CD8-positive, alpha-beta T cell (primary cell): ENCODE measurements at regions of chr12 and their contacts with region 1.

Region 1: DNA sequence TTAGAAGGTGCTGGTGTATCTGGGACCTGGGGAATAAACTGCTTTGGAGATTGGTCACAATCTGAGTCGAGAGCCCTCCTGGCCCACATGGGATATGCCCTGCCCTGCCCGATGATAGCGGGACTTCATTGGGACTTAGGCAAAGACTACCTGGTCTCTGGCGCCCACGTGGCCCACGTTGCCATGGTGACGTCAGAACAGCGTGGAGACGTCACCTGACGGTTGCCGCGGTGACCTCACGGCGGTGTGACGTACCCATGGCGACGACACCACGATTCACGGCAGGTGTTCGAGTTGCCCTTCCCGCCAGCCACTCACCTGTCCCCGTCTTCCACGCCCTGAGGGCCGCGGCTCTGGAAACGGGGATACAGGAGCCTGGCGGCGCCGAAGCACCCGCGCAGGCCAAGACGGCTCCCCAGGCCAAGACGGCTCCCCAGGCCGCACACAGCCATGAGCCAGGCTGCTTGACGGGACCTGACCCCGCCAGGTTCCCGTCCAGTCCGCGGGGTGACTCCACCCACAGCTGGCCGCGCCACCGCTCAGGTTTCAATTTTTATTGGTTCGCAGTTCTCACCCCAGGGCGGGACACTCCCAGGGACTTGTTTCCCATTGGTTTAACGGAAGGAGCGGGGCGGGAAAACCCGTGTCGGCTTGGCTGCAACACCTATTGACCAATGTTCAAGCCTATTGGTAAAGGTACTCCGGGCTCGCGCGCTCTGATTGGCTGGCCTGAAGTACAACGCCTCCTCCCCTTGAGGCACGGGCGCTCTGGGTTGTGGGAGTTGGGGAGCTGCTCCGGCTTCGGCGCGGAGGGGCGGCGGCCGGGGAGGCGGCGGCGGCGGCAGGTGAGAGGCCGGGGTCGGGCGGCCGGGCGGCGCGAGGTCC is at the starts of genes MMAB and MVK:
- DNase-seq: peak; percentile 96 to 99 (median 98)
- ATAC-seq: peak; percentile 92
- H3K4me3 ChIP-seq: peak within 1 kb of the TSS; percentile 73 to 82
- H3K4me3 Mint-ChIP-seq: peak within 1 kb of the TSS; percentile 95
- H3K27ac ChIP-seq: peak within 1 kb of the TSS; percentile 95
- H3K27ac Mint-ChIP-seq: peak within 1 kb of the TSS; percentile 96
- H3K4me1 ChIP-seq: peaks cover 16% of the 10 kb centered on the region
- H3K4me1 Mint-ChIP-seq: peaks cover 35% of the 10 kb centered on the region
- H3K27me3 ChIP-seq: no peaks in the 10 kb centered on the region
- H3K27me3 Mint-ChIP-seq: no peaks in the 10 kb centered on the region
- CTCF ChIP-seq: no peak
- total RNA-seq, gene MMAB: 10.2 to 11.7 TPM
- total RNA-seq, gene MVK: 11.5 to 13.9 TPM

Region 2: GRCh38 chr12:109154451-109155438 is 418.5 kb before region 1 on chr12:
- CTCF ChIA-PET with region 1: no interaction called
- POLR2A ChIA-PET with region 1: no interaction called
- intact Hi-C with region 1: loop called in 1 of 2 experiments (anchors 5 kb)
- DNase-seq: peak; percentile 60 to 89 (median 78)
- ATAC-seq: peak; percentile 98
- H3K4me3 ChIP-seq: peak overlapping the region; percentile 60 to 80
- H3K4me3 Mint-ChIP-seq: peak overlapping the region; percentile 95
- H3K27ac ChIP-seq: peak overlapping the region; percentile 22 to 46
- H3K27ac Mint-ChIP-seq: peak overlapping the region; percentile 89
- H3K4me1 ChIP-seq: peaks cover 20% of the 10 kb centered on the region
- H3K4me1 Mint-ChIP-seq: peaks cover 17% of the 10 kb centered on the region
- H3K27me3 ChIP-seq: no peaks in the 10 kb centered on the region
- H3K27me3 Mint-ChIP-seq: peaks cover 3% of the 10 kb centered on the region
- CTCF ChIP-seq: no peak

Region 3: GRCh38 chr12:109597795-109598427 is 24.6 kb after region 1 on chr12:
- CTCF ChIA-PET with region 1: interaction called, 15 read pairs
- POLR2A ChIA-PET with region 1: interaction called, 4 read pairs
- intact Hi-C with region 1: no loop called
- DNase-seq: peak; percentile 31 to 76 (median 64)
- ATAC-seq: peak; percentile 70
- H3K4me3 ChIP-seq: no peak overlapping the region
- H3K4me3 Mint-ChIP-seq: no peak overlapping the region
- H3K27ac ChIP-seq: no peak overlapping the region
- H3K27ac Mint-ChIP-seq: no peak overlapping the region
- H3K4me1 ChIP-seq: peaks cover 11% of the 10 kb centered on the region
- H3K4me1 Mint-ChIP-seq: peaks cover 23% of the 10 kb centered on the region
- H3K27me3 ChIP-seq: no peaks in the 10 kb centered on the region
- H3K27me3 Mint-ChIP-seq: no peaks in the 10 kb centered on the region
- CTCF ChIP-seq: peak; percentile 85

Region 4: GRCh38 chr12:110124184-110124995 is 551.1 kb after region 1 on chr12 and contains the start of gene IFT81:
- CTCF ChIA-PET with region 1: no interaction called
- POLR2A ChIA-PET with region 1: no interaction called
- intact Hi-C with region 1: loop called (anchors 1 to 10 kb)
- DNase-seq: peak; percentile 94 to 99 (median 96)
- ATAC-seq: peak; percentile 95
- H3K4me3 ChIP-seq: peak within 1 kb of the TSS; percentile 69 to 96
- H3K4me3 Mint-ChIP-seq: peak within 1 kb of the TSS; percentile 91
- H3K27ac ChIP-seq: peak within 1 kb of the TSS; percentile 60 to 73
- H3K27ac Mint-ChIP-seq: peak within 1 kb of the TSS; percentile 83
- H3K4me1 ChIP-seq: peaks cover 10% of the 10 kb centered on the region
- H3K4me1 Mint-ChIP-seq: peaks cover 8% of the 10 kb centered on the region
- H3K27me3 ChIP-seq: no peaks in the 10 kb centered on the region
- H3K27me3 Mint-ChIP-seq: peaks cover 3% of the 10 kb centered on the region
- CTCF ChIP-seq: no peak
- total RNA-seq, gene IFT81: 0.25 to 0.43 TPM

Region 5: GRCh38 chr12:110403146-110403975 is 830.1 kb after region 1 on chr12 and contains the start of gene ANAPC7:
- CTCF ChIA-PET with region 1: no interaction called
- POLR2A ChIA-PET with region 1: no interaction called
- intact Hi-C with region 1: loop called in 1 of 2 experiments (anchors 5 kb)
- DNase-seq: peak; percentile 69 to 93 (median 87)
- ATAC-seq: peak; percentile 96
- H3K4me3 ChIP-seq: peak within 1 kb of the TSS; percentile 87 to 89
- H3K4me3 Mint-ChIP-seq: peak within 1 kb of the TSS; percentile 100
- H3K27ac ChIP-seq: peak within 1 kb of the TSS; percentile 78 to 96
- H3K27ac Mint-ChIP-seq: peak within 1 kb of the TSS; percentile 98
- H3K4me1 ChIP-seq: peaks cover 20% of the 10 kb centered on the region
- H3K4me1 Mint-ChIP-seq: peaks cover 33% of the 10 kb centered on the region
- H3K27me3 ChIP-seq: no peaks in the 10 kb centered on the region
- H3K27me3 Mint-ChIP-seq: no peaks in the 10 kb centered on the region
- CTCF ChIP-seq: no peak
- total RNA-seq, gene ANAPC7: 22.1 to 23.2 TPM